Right ventricle myocardium inferior (tissue), 1 donor: ENCODE measurements at regions of chr7 and their contacts with region 1.

Region 1: DNA sequence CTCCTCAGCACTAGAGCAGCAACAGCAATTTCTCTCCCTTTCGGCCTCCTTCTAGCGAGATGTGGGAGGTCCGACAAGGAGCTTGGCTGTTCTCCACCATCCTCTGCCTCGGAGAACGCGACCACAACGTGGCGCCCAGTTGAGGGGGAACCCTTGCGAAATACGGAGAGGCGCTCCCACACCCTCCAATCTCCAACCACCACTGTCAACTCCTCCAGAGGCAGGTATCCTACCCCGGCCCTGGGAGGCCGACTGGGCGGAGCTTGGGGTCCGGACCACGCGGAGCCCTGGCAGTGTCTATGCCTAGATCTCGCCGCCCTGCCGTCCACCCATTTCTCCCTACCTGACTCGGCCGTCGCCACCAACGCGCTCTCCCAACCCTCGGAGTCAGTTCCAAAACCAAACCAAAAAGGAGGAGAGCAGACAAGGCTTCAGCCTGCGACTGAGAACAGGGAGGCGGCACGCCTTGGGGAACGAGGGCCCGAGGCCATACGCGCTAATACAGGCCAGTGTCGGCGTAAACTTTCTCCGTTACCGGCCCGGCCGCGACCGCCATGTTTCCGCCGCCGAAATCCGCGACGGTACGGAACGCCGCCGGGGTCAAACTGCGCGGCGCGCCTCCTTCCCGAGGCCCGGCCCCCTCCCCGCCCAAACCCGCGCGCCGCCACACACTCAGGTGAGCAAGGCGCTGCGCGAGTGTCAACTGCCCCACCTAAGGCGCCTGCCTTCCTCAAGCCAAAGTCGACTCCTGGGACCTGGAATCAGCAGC is at the start of gene TMEM168:
- DNase-seq: peak; percentile 93
- ATAC-seq: peak; percentile 92
- total RNA-seq, gene TMEM168: 12.8 TPM

Region 2: DNA sequence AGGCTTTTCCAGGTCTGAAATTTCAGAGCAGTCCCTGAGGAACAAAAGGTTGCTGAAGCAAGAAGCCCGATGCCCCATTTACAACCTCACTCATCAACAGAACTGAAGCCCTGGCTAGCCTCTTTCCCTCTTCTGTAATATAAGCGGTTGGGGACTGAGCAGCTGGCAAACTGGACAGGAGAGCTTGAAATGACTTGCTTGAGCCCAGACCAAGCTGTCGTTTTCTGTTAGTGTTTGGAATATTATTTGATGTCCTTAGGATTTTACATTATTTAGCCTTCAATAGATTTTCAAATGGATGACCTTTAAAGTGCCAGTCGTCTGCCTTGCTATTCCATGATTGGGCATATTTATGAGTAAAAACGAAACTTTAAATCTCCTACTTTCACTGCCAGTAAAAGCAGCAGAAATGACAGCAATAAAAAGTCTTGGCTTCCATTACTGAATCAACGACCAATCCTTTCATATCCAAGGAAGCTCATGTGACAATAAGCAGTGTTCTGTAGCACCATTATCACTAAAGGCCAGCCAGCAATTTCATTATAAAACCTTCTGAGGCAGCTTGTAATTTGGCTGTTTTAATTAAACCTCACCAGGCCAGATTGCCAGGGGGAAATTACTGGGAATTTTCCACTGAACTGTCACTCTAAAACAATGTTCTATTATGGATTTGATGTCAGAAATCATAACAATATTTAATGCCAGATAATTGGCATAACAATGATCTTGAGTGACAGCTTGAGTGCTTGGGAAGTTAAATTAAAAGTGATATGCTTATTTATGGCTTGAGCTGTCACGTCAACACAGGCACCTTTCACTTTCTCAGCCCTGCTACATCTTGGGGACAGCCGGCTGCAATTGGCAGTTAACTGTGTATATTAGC is 223.3 kb before region 1 on chr7:
- intact Hi-C with region 1: loop called (anchors 10 kb)
- DNase-seq: no peak
- ATAC-seq: peak; percentile 71

Region 3: DNA sequence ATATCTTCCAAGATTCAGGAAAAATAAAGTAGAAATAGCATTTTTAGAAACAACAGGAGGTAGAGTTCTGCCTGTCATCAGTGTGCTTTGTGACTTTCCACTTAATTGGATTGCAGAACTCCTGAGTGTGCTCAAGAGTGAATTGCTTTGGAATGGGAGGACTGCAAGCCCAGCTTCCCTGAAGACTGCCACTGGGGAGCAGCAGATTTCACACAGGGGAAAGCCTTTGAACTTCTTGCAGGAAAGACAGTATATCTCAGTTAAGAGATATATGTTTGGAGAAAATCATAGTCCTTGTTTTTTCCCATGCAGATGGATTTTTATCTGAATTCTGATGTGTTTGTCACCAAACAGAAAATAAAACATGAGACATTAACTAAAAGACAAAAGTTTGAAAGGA is 124.3 kb before region 1 on chr7:
- intact Hi-C with region 1: loop called (anchors 5 kb)
- DNase-seq: no peak
- ATAC-seq: no peak

Region 4: DNA sequence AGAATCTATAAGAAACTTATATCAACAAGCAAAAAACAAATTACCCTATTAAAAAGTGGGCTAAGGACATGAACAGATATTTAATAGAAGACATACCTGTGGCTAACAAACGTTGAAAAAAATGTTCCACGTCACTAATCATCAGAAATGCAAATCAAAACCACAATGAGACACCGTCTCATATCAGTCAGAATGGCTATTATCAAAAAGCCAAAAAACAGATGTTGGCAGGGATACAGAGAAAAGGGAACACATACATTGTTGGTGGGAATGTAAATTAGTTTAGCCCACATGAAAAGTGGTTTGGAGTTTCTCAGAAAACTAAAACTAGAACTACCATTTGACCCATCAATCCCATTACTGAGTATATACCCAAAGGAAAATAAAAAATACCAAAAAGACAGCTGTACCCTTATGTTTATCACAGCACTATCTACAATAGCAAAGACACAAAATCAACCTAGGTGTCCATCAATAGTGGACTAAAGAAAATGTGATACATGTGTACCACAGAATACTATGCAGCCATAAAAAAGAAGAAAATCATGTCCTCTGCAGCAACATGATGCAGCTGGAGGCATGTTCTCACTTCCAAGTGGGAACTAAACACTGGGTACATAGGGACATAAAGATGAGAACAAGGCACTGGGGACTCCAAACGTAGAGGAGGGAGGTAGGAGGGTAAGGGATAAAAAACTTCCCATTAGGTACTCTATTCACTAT is 84.0 kb after region 1 on chr7:
- intact Hi-C with region 1: loop called (anchors 10 kb)
- DNase-seq: no peak
- ATAC-seq: no peak

Region 5: GRCh38 chr7:112908086-112908485 is 118.1 kb after region 1 on chr7:
- intact Hi-C with region 1: no loop called
- DNase-seq: no peak
- ATAC-seq: no peak

Region 6: DNA sequence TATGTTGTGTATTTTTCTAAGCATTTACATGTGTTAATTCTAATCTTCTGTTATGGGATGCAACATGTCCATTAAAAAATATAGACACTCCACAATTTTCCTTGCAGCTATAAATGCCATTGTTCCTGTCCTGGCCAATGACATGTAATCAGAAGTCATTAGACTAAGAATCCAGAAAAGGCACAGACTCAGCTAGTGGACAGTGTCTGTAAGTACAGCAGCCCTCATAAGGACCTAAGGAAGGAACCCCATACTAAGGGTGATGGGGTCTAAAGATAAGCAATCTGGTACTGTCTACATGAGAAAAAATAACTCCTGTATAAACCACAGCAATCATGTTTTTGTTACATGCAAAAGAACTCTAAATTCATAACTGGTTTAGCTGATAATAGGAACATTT is 180.8 kb after region 1 on chr7:
- intact Hi-C with region 1: no loop called
- DNase-seq: no peak
- ATAC-seq: no peak

Region 7: DNA sequence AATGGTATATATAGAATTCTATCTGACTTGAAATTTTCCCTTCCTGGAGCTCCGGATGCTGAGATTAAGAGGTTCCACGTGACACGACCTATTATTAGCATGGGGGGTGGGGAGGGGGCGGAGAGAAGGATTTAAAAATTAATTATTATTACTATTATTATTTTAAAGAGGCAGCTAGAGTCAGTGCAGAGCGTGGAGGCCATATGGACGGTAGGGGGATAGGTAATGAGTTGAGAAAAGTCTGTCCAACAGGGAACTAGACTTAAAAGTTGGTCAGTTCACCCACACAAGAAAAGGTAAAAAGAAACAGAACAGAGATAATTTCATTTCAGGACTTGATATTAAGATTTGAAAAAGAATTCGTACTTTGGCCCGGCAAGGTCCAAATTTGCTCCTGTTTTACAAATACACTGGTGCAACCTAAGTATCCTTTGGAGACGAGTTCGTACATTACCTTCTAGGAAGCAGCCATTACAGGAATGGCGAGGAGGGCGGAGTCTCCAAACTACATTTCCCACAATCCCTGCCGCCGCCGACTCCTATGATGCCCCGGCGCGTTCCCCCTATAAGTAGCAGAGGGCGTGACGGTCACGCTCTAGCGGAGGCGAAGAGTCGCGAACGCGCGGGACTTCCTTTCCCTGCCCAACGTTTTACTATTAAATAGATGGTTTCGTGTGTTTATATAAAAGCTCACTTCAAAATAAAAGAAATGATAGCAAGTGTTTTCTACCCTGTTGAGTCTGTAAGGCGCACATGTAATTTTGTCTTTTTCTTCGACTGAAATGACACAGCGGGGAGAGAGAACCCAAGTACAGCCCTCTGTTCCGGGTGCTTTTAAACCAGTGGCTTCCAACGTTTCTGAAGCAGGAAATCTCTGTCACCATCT is 328.3 kb after region 1 on chr7 and contains the start of gene SMIM30:
- intact Hi-C with region 1: loop called (anchors 10 kb)
- DNase-seq: peak; percentile 96
- ATAC-seq: peak; percentile 100
- total RNA-seq, gene SMIM30: 117 TPM